ENCODE measurements at regions of chr7 and their contacts with region 1.

Region 1: GRCh38 chr7:2680792-2681490 is 7.1 kb upstream of the AMZ1 start:
- DNase-seq: peak; percentile 46 to 95
- H3K4me3 ChIP-seq: no peak overlapping the region
- H3K27ac ChIP-seq: no peak overlapping the region
- H3K4me1 ChIP-seq: no peaks in the 10 kb centered on the region
- H3K27me3 ChIP-seq: no peaks in the 10 kb centered on the region; a peak in 1 of 7 replicates
- CTCF ChIP-seq: peak; percentile 85 to 89 (median 86)
- EP300 ChIP-seq: no peak
- POLR2A ChIP-seq: no peak
- RAD21 ChIP-seq: peak; percentile 84 to 88

Region 2: DNA sequence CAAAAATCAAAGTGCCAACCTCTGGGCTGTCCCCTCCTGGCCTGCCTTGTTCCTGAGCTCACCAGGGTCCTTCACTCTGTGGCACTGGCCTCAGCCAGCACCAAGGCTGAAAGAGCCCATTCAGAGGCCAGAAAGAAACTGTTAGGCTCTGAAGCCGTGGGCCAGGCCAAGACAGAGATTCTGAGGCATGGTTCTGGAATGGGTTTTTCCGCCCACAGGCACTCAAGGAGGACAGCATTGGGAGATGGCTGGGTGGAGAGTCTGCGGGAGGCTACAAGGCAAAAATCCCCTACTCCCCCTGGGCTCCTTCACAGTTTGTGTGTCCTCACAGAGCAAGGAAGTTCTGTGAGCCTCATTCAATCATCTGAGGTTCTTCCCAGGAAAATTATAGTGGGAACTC is 236.5 kb before region 1 on chr7:
- CTCF ChIA-PET with region 1: no interaction called
- POLR2A ChIA-PET with region 1: no interaction called
- DNase-seq: no peak
- H3K4me3 ChIP-seq: no peak overlapping the region
- H3K27ac ChIP-seq: no peak overlapping the region
- H3K4me1 ChIP-seq: no peaks in the 10 kb centered on the region
- H3K27me3 ChIP-seq: no peaks in the 10 kb centered on the region
- CTCF ChIP-seq: no peak
- EP300 ChIP-seq: no peak
- POLR2A ChIP-seq: no peak
- RAD21 ChIP-seq: no peak

Region 3: DNA sequence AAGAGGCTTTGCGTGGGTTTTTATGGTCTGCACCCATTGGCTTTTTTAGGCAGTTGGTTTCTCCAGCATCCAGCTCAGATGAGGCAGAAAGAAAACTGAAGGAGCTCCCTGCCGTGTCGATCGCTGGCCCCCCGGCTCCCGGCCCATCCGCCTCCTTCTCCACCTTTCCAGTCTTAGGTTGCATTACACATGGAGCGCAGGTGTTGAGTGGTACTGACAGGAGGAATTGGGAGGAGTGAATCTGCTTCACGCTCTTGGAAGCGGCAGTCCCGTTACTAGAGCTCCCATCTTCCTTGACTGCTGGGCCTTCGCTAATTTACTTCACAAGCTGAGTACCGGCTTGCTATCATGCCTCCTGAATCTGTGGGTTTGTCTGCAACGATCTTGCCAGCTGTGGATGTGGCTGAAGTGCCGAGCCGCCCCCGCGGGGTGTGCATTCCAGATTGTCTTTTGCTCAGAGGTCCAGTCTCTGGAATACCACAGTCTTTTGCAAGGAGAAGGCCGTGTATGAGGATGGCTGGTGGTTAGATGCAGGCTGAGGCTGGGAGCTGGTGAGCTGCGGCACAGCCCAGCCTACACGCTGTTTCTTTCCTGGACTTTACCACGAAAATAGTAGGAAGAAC is 105.1 kb before region 1 on chr7:
- CTCF ChIA-PET with region 1: interaction called, 18 read pairs
- POLR2A ChIA-PET with region 1: no interaction called
- DNase-seq: no peak
- H3K4me3 ChIP-seq: no peak overlapping the region
- H3K27ac ChIP-seq: no peak overlapping the region
- H3K4me1 ChIP-seq: peaks cover 0 to 2% (median 0%) of the 10 kb centered on the region in 4 experiments; a peak in 1 of 7 replicates
- H3K27me3 ChIP-seq: no peaks in the 10 kb centered on the region
- CTCF ChIP-seq: no peak
- EP300 ChIP-seq: no peak
- POLR2A ChIP-seq: no peak
- RAD21 ChIP-seq: no peak

Region 4: DNA sequence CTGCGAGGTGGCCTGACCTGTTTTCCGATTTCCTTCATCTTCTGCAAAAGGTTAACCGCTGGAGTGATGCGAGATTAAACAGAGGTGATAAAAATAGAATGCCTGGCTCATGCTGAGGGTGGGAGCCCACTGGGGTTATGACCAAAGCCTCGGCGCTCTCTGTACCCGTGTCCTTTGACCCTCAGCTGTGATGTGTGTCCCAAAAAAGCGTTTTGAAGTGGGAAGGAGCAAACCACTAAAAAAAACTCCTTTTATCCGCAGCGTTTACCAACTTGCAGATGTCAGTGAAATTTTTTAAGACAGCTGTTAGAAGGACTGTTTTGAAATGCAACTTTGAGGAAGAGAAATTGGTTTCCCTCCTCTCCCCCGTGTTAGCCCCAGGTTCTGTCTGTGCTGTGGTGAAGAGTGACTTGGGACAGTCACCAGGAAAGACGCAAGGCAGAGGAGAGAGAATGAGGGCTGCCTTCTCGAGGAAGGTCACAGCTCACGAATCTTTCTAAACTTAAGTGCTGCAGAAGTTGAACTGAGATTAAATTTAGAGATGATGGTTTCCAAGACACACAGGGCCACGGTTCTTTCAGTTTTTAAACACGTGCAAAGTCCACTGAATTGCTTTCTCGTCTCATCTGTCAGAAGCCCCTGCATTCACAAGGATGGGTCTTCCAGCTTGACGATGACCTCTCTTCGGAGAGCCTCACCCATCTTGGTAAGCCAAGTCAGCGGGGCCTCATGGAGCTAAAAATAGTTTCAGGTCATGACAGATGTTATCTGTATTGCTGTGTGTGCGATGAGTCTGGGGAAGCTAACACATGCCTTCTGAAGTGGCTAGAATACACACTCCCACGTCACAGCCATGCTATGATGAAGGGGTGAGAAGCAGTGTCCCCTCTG is 34.6 kb after region 1 on chr7:
- CTCF ChIA-PET with region 1: interaction called, 46 read pairs
- POLR2A ChIA-PET with region 1: no interaction called
- DNase-seq: no peak
- H3K4me3 ChIP-seq: no peak overlapping the region
- H3K27ac ChIP-seq: no peak overlapping the region
- H3K4me1 ChIP-seq: no peaks in the 10 kb centered on the region; a peak in 3 of 7 replicates
- H3K27me3 ChIP-seq: no peaks in the 10 kb centered on the region
- CTCF ChIP-seq: no peak
- EP300 ChIP-seq: no peak
- POLR2A ChIP-seq: no peak
- RAD21 ChIP-seq: no peak

Region 5: GRCh38 chr7:2737771-2738540 is 57.0 kb after region 1 on chr7:
- CTCF ChIA-PET with region 1: no interaction called
- POLR2A ChIA-PET with region 1: no interaction called
- DNase-seq: no peak
- H3K4me3 ChIP-seq: no peak overlapping the region
- H3K27ac ChIP-seq: no peak overlapping the region
- H3K4me1 ChIP-seq: peaks cover 0 to 12% (median 4%) of the 10 kb centered on the region in 4 experiments; a peak in 4 of 7 replicates
- H3K27me3 ChIP-seq: no peaks in the 10 kb centered on the region
- CTCF ChIP-seq: no peak
- EP300 ChIP-seq: no peak
- POLR2A ChIP-seq: no peak
- RAD21 ChIP-seq: no peak

Region 6: GRCh38 chr7:2851497-2851896 is 170.6 kb after region 1 on chr7:
- CTCF ChIA-PET with region 1: no interaction called
- POLR2A ChIA-PET with region 1: no interaction called
- DNase-seq: no peak
- H3K4me3 ChIP-seq: no peak overlapping the region
- H3K27ac ChIP-seq: no peak overlapping the region
- H3K4me1 ChIP-seq: no peaks in the 10 kb centered on the region
- H3K27me3 ChIP-seq: no peaks in the 10 kb centered on the region; a peak in 2 of 7 replicates
- CTCF ChIP-seq: no peak
- EP300 ChIP-seq: no peak
- POLR2A ChIP-seq: no peak
- RAD21 ChIP-seq: no peak

Region 7: DNA sequence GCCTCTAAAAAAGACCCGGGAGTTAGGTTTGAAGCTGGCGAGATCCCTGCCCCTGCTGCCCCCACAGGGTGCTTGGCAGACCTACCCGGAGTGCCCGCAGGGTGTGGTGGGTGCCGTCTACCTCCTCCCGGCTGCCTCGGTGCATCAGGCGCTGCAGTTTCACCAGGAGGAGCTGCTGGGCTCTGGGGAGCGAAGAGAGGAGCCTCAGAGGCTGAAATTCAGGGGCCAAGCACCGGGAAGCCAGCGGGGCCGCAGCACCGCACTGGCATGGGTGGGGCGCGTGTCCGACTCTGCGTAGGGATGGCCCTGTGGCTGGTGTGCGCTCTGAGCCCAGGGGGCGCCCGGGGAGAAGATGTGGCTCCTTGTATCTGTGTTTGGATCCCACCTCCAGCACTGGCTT is 237.5 kb after region 1 on chr7:
- CTCF ChIA-PET with region 1: no interaction called
- POLR2A ChIA-PET with region 1: no interaction called
- DNase-seq: no peak
- H3K4me3 ChIP-seq: no peak overlapping the region
- H3K27ac ChIP-seq: no peak overlapping the region
- H3K4me1 ChIP-seq: no peaks in the 10 kb centered on the region; a peak in 1 of 7 replicates
- H3K27me3 ChIP-seq: no peaks in the 10 kb centered on the region; a peak in 1 of 7 replicates
- CTCF ChIP-seq: no peak
- EP300 ChIP-seq: no peak
- POLR2A ChIP-seq: no peak
- RAD21 ChIP-seq: no peak